ENCODE measurements at regions of chr12 and their contacts with region 1.

Region 1: GRCh38 chr12:49644620-49644994 is 21.2 kb downstream of the PRPF40B start:
- DNase-seq: no peak
- H3K4me3 ChIP-seq: no peak overlapping the region
- CTCF ChIP-seq: peak; percentile 88

Region 2: DNA sequence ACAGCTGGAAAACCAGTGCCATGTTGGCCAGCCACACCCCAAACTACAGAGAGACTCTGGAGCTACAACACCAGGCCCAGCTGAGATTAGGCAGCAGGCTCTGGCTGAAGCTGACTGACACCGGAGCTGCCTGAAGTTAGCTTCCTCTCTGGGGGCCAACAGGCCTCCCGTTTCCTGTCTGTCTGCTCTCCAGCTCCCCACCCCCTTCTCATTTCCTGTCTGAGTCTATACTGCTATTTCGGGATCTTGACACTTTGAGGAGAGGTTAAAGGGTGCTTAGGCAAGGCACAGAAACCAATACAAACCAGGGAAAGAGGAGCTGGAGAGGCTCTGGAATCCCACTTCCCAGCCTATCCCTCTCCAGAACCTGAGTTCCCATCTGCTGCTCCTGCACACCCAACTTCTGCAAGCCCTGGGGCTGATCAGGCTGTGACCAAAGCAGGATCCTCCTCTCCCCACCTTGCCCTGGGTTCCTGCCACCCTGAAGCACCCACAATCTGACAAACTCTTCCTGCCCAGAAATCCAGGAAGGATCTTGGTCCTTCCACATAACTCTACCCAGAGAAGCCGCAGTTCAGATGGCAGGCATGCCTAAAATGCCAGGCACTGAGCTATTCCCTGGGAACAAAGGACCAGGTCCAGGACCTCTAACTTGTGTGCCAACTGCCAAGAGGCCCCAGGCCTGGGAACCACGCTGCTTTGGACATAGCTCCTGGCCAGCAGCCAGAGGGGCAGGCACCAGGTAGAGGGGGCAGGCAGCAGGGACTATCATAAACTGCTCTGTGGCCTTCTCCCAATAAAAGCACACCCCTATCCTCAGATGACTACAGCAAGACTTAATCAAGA is 18.6 kb after region 1 on chr12:
- CTCF ChIA-PET with region 1: interaction called, 300 read pairs
- POLR2A ChIA-PET with region 1: interaction called, 3 read pairs
- DNase-seq: no peak
- H3K4me3 ChIP-seq: no peak overlapping the region
- CTCF ChIP-seq: no peak

Region 3: GRCh38 chr12:49678711-49679110 is 34.1 kb after region 1 on chr12:
- CTCF ChIA-PET with region 1: interaction called, 20 read pairs
- POLR2A ChIA-PET with region 1: interaction called, 5 read pairs
- DNase-seq: no peak
- H3K4me3 ChIP-seq: no peak overlapping the region
- CTCF ChIP-seq: no peak

Region 4: GRCh38 chr12:49750027-49750995 is 105.7 kb after region 1 on chr12:
- CTCF ChIA-PET with region 1: interaction called, 20 read pairs
- POLR2A ChIA-PET with region 1: no interaction called
- DNase-seq: no peak
- H3K4me3 ChIP-seq: no peak overlapping the region
- CTCF ChIP-seq: no peak

Region 5: DNA sequence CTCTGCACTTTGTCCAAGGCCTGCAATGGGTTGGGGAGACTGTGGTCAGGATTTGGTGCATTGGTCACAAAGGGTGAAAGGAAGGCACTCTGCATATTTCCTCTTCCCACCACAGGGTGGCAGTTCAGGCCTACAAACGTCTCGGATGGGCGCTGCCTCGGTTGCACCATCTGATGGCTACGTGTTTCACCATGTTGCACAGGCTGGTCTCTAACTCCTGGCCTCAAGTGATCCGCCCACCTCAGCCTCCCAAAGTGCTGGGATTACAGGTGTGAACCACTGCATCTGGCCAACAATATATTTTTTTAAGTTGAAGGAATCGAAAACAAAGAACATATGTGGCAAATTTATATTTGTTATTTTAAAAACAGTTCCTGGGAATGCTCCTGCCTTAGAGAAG is 131.8 kb after region 1 on chr12:
- CTCF ChIA-PET with region 1: interaction called, 19 read pairs
- POLR2A ChIA-PET with region 1: no interaction called
- DNase-seq: no peak
- H3K4me3 ChIP-seq: no peak overlapping the region
- CTCF ChIP-seq: peak; percentile 83

Region 6: GRCh38 chr12:49903695-49904423 is 259.3 kb after region 1 on chr12 and contains the start of gene FAIM2:
- CTCF ChIA-PET with region 1: no interaction called
- POLR2A ChIA-PET with region 1: no interaction called
- DNase-seq: no peak
- H3K4me3 ChIP-seq: peak within 1 kb of the TSS; percentile 49
- CTCF ChIP-seq: no peak

Measured in AG04449 (cell line).